ENCODE measurements at regions of chr7 and their contacts with region 1.

Region 1: DNA sequence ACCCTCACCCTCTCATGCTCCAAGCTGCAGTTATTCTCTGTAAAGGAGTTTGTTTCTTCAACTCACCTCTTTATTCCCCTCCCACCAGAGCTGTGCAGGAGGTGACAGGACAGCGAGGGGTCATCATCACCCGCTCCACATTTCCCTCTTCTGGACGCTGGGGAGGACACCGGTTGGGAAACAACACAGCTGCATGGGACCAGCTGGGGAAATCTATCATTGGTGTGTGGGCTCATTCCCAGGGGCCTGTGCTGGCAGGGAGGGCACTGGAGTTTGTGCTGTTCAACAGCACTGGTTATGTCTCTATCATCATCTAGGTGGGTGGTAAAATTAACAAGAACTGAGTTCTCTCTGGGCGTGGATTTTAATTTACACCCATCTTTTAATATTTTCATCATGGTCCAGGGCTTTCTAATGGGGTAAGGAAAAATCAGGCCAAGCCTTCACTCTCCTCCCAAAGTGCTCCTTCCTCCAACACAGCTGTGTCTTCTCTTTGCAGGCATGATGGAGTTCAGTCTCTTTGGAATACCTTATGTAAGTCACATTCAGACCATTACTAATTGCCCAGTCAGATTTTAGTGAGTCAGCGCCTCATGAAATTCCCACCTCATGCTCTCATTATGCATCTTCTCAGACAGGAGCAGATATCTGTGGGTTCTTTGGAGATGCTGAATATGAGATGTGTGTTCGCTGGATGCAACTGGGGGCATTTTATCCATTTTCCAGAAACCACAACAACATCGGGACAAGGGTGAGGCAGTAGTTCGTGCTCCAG is 61.6 kb downstream of the PRSS58 start:
- DNase-seq: no peak
- H3K4me3 ChIP-seq: no peak overlapping the region
- H3K27ac ChIP-seq: no peak overlapping the region
- H3K4me1 ChIP-seq: no peaks in the 10 kb centered on the region
- H3K27me3 ChIP-seq: no peaks in the 10 kb centered on the region
- CTCF ChIP-seq: no peak
- EP300 ChIP-seq: no peak
- POLR2A ChIP-seq: no peak

Region 2: GRCh38 chr7:140876519-140877248 is 1319.6 kb before region 1 on chr7:
- intact Hi-C with region 1: no loop called
- DNase-seq: no peak
- H3K4me3 ChIP-seq: no peak overlapping the region
- H3K27ac ChIP-seq: no peak overlapping the region
- H3K4me1 ChIP-seq: peaks cover 4% of the 10 kb centered on the region
- H3K27me3 ChIP-seq: no peaks in the 10 kb centered on the region
- CTCF ChIP-seq: no peak
- EP300 ChIP-seq: no peak
- POLR2A ChIP-seq: no peak

Region 3: DNA sequence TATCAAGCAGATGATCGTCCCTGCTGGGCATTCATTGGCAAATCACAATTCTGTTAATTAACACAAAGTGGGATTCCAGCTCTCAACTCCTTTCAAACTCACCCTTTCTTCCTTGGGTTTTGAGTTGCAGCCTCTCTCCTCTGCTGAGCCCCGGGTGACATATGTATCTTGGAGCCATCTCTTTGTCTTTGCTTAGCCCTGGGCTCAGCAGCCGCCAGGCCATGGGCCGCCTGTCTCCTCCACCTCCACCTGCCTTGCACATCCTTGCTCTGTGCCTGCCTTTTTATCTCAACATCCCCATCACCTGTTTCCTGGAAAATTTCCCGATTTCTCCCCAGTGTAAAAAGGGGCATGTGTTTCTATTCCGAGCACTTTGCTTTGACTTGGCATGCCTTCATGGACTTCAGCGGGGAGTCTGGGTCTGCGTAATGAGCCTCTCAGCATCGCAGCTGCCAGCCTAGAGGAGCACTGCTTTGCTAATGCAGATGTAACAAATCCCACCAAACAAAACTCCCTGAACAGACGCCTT is 786.4 kb before region 1 on chr7:
- intact Hi-C with region 1: loop called in 1 of 4 experiments (anchors 10 kb)
- DNase-seq: no peak
- H3K4me3 ChIP-seq: no peak overlapping the region
- H3K27ac ChIP-seq: no peak overlapping the region
- H3K4me1 ChIP-seq: no peaks in the 10 kb centered on the region
- H3K27me3 ChIP-seq: no peaks in the 10 kb centered on the region
- CTCF ChIP-seq: no peak
- EP300 ChIP-seq: no peak
- POLR2A ChIP-seq: no peak

Measured in ovary (tissue), 10 donors.